GM13976 (cell line): ENCODE measurements at regions of chr2 and their contacts with region 1.

Region 1: DNA sequence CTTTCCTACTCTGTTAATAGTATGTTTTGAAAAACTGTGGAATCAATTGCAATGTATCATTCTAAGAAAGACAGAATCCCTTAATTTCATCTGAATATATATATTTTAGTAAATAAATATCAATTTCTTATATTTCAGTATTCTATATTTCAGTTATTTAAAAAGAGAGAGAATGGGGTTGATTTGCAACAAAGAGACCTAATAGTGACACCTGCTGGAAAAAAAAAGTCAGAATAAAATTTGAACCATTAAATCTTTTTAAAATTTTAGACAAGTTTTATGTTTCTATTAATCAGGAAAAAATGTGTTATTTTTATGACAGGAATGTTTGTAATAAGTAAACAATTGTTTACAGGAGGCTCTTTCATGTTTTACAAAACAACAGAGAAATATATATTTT is 20.7 kb upstream of the CCNT2 start:
- DNase-seq: peak; percentile 22
- CTCF ChIP-seq: no peak

Region 2: GRCh38 chr2:134460583-134460998 is 437.3 kb before region 1 on chr2:
- in situ Hi-C with region 1: loop called (anchors 5 kb)
- DNase-seq: peak; percentile 83
- CTCF ChIP-seq: peak; percentile 39

Region 3: DNA sequence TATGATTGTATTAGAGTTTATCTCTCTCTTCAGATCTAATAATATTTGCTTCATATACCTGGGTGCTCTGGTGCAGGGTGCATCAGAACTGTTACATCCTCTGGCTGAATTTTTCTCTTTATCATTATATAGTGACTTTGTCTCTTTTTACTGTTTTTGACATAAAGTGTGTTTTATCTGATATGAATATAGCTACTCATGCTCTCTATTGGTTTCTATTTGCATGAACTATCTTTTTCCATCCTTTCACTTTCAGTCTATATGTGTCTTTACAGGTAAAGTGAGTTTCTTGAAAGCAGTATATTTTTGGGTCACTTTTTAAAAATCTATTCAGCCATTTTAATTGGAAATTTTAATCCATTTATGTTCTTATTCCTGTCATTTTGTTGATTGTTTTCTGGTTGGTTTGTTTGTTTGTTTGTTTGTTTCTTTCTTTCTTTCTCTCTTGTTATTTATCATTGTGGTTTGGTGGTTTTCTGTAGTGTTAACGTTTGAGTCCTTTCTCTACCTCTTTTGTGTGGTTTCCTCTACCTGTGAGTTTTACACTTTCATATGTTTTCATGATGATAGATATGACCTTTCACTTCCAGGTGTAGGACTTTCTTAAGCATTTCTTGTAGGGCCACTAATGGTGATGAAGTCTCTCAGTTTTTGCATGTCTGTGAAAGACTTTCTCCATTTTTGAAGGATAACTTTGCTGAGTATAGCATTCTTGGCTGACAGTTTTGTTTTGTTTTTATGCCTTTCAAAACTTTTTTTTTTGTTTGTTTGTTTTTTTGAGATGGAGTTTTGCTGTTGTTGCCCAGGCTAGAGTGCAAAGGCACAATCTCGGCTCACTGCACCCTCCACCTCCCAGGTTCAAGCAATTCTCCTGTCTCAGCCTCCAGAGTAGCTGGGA is 75.6 kb after region 1 on chr2:
- in situ Hi-C with region 1: no loop called
- DNase-seq: peak; percentile 28
- CTCF ChIP-seq: no peak

Region 4: GRCh38 chr2:135829378-135830135 is 931.6 kb after region 1 on chr2:
- in situ Hi-C with region 1: no loop called
- DNase-seq: no peak
- CTCF ChIP-seq: no peak